Mammary epithelial cell (primary cell): ENCODE measurements at regions of chr12 and their contacts with region 1.

Region 1: GRCh38 chr12:10235761-10236631 is 23.3 kb downstream of the GABARAPL1 start:
- DNase-seq: no peak
- H3K4me3 ChIP-seq: no peak overlapping the region
- H3K27ac ChIP-seq: no peak overlapping the region
- H3K4me1 ChIP-seq: no peaks in the 10 kb centered on the region
- H3K27me3 ChIP-seq: no peaks in the 10 kb centered on the region
- CTCF ChIP-seq: peak; percentile 73 to 75

Region 2: GRCh38 chr12:10276774-10277173 is 40.8 kb after region 1 on chr12:
- CTCF ChIA-PET with region 1: no interaction called
- dilution Hi-C with region 1: loop called (anchors 5 kb)
- in situ Hi-C with region 1: no loop called
- intact Hi-C with region 1: no loop called
- DNase-seq: no peak
- H3K4me3 ChIP-seq: no peak overlapping the region
- H3K27ac ChIP-seq: no peak overlapping the region
- H3K4me1 ChIP-seq: no peaks in the 10 kb centered on the region
- H3K27me3 ChIP-seq: peaks cover 2% of the 10 kb centered on the region
- CTCF ChIP-seq: no peak

Region 3: DNA sequence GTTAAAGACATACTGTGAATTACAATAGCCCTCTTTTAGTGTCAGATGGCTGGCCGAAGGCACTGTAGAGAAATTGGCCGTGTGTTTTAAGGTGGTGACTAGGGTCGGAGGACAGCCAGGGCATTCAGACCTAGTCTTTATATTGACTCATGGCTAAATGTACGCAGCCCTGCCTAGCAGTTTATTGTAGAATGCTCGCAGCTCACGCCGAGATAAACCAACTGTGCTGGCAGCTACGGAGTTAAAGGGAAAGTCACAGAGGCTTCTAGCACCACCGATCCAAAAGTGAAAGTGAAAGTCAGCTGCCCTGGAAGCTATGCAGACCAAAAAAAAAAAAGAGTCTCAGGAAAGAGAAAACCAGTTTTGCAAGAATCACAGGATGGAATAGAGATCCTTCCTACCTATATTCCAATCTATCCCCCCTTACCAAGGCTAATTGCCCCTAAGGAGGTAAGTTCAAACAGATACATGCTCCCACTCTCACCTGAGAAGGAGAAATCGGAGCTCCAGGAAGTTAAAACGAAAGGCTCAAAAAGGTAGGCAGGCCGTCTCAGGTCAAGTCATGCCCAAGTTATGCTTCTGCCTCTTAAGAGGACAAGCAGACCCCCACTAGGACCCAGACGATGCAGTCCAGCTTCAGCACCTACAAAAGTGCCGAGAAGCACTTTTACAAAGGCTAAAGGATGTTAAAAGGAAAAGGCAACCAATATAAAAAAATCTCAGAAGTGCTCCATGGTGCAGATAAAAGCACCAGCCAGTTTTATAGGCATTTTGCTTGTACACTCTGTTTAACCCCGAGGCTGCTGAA is 129.0 kb after region 1 on chr12:
- CTCF ChIA-PET with region 1: no interaction called
- dilution Hi-C with region 1: no loop called
- in situ Hi-C with region 1: no loop called
- intact Hi-C with region 1: loop called (anchors 2 kb)
- DNase-seq: peak; percentile 83
- H3K4me3 ChIP-seq: peak overlapping the region; percentile 52 to 65 (median 61)
- H3K27ac ChIP-seq: peak overlapping the region; percentile 90
- H3K4me1 ChIP-seq: peaks cover 51% of the 10 kb centered on the region
- H3K27me3 ChIP-seq: no peaks in the 10 kb centered on the region
- CTCF ChIP-seq: no peak

Region 4: GRCh38 chr12:10562306-10562933 is 326.4 kb after region 1 on chr12:
- CTCF ChIA-PET with region 1: no interaction called
- dilution Hi-C with region 1: no loop called
- in situ Hi-C with region 1: loop called (anchors 10 to 25 kb)
- intact Hi-C with region 1: loop called (anchors 1 kb)
- DNase-seq: peak; percentile 20
- H3K4me3 ChIP-seq: no peak overlapping the region
- H3K27ac ChIP-seq: no peak overlapping the region
- H3K4me1 ChIP-seq: no peaks in the 10 kb centered on the region
- H3K27me3 ChIP-seq: no peaks in the 10 kb centered on the region
- CTCF ChIP-seq: peak; percentile 64

Region 5: GRCh38 chr12:10673660-10674384 is 437.8 kb after region 1 on chr12 and contains the start of gene STYK1:
- CTCF ChIA-PET with region 1: no interaction called
- dilution Hi-C with region 1: no loop called
- in situ Hi-C with region 1: loop called (anchors 10 to 25 kb)
- intact Hi-C with region 1: loop called (anchors 1 kb)
- DNase-seq: peak; percentile 87
- H3K4me3 ChIP-seq: peak within 1 kb of the TSS; percentile 70 to 82 (median 76)
- H3K27ac ChIP-seq: peak within 1 kb of the TSS; percentile 64
- H3K4me1 ChIP-seq: peaks cover 4% of the 10 kb centered on the region
- H3K27me3 ChIP-seq: no peaks in the 10 kb centered on the region
- CTCF ChIP-seq: peak; percentile 93 to 98
- total RNA-seq, gene STYK1: 4.8 to 4.9 TPM

Region 6: GRCh38 chr12:10749700-10750384 is 513.8 kb after region 1 on chr12:
- CTCF ChIA-PET with region 1: no interaction called
- dilution Hi-C with region 1: no loop called
- in situ Hi-C with region 1: no loop called
- intact Hi-C with region 1: loop called (anchors 1 kb)
- DNase-seq: peak; percentile 90
- H3K4me3 ChIP-seq: peak overlapping the region; percentile 6 to 34 (median 11)
- H3K27ac ChIP-seq: peak overlapping the region; percentile 51
- H3K4me1 ChIP-seq: peaks cover 7% of the 10 kb centered on the region
- H3K27me3 ChIP-seq: no peaks in the 10 kb centered on the region
- CTCF ChIP-seq: peak; percentile 90 to 93